Activated CD4-positive, alpha-beta T cell treated with anti-CD3 and anti-CD28 coated beads for 36 hours (primary cell): ENCODE measurements at regions of chr1 and their contacts with region 1.

Region 1: GRCh38 chr1:31663622-31664452 is 19.2 kb upstream of the PEF1 start:
- DNase-seq: peak; percentile 71
- ATAC-seq: peak; percentile 55
- H3K4me3 Mint-ChIP-seq: no peak overlapping the region
- H3K27ac Mint-ChIP-seq: no peak overlapping the region
- H3K4me1 Mint-ChIP-seq: no peaks in the 10 kb centered on the region
- H3K27me3 Mint-ChIP-seq: no peaks in the 10 kb centered on the region

Region 2: GRCh38 chr1:31689821-31690220 is 26.0 kb after region 1 on chr1:
- CTCF ChIA-PET with region 1: no interaction called
- POLR2A ChIA-PET with region 1: no interaction called
- intact Hi-C with region 1: no loop called
- DNase-seq: no peak
- ATAC-seq: no peak
- H3K4me3 Mint-ChIP-seq: no peak overlapping the region
- H3K27ac Mint-ChIP-seq: no peak overlapping the region
- H3K4me1 Mint-ChIP-seq: no peaks in the 10 kb centered on the region
- H3K27me3 Mint-ChIP-seq: peaks cover 4% of the 10 kb centered on the region

Region 3: GRCh38 chr1:31705080-31705866 is 41.4 kb after region 1 on chr1:
- CTCF ChIA-PET with region 1: interaction called, 3 read pairs
- POLR2A ChIA-PET with region 1: no interaction called
- intact Hi-C with region 1: loop called (anchors 1 to 5 kb)
- DNase-seq: peak; percentile 88
- ATAC-seq: peak; percentile 88
- H3K4me3 Mint-ChIP-seq: no peak overlapping the region
- H3K27ac Mint-ChIP-seq: peak overlapping the region; percentile 38
- H3K4me1 Mint-ChIP-seq: peaks cover 34% of the 10 kb centered on the region
- H3K27me3 Mint-ChIP-seq: peaks cover 37% of the 10 kb centered on the region

Region 4: DNA sequence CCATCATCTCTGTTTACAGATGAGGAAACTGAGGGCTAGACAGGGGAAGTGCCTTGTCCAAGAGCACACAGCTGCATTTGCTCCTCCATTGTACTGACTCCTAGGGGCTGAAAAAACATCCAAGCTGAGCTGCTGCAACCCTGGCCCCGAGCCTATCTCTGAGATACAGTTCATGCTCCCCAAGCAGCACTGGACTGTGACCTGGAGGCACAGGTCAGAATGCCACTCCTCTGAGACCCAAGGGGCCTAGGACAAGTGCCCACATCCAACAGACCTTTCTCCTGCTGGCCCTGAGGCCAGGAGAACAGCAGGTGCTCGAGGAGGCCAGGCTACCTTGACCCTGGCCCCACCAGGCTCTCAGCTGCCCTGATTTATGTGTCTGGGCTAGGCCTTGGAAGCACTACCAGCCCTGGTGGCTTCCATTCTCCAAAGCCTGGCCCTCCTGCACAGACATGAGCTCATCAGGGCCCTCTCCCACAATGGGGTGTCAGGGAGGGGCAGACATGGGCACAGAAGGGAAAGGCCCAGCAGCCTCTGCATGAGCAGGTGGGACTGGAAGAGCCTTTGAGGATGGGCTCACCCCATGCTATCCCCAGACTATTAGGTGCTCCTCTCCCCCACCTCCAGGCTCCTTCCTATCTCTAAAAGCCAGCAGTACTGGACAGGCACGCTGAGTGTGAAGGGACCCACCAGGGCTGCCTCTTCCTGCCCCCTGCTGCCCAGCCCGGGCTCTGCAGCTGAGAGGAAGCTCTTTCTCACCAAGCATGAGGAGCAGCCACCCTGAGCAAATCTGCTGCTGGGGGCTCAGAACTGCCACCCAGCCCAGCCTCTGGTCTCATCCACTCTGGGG is 81.5 kb after region 1 on chr1:
- CTCF ChIA-PET with region 1: interaction called, 9 read pairs
- POLR2A ChIA-PET with region 1: no interaction called
- intact Hi-C with region 1: loop called (anchors 1 kb)
- DNase-seq: peak; percentile 80
- ATAC-seq: peak; percentile 91
- H3K4me3 Mint-ChIP-seq: no peak overlapping the region
- H3K27ac Mint-ChIP-seq: no peak overlapping the region
- H3K4me1 Mint-ChIP-seq: peaks cover 5% of the 10 kb centered on the region
- H3K27me3 Mint-ChIP-seq: no peaks in the 10 kb centered on the region